Activated CD4-positive, alpha-beta memory T cell treated with anti-CD3 and anti-CD28 coated beads for 36 hours (primary cell): ENCODE measurements at regions of chr3 and their contacts with region 1.

Region 1: DNA sequence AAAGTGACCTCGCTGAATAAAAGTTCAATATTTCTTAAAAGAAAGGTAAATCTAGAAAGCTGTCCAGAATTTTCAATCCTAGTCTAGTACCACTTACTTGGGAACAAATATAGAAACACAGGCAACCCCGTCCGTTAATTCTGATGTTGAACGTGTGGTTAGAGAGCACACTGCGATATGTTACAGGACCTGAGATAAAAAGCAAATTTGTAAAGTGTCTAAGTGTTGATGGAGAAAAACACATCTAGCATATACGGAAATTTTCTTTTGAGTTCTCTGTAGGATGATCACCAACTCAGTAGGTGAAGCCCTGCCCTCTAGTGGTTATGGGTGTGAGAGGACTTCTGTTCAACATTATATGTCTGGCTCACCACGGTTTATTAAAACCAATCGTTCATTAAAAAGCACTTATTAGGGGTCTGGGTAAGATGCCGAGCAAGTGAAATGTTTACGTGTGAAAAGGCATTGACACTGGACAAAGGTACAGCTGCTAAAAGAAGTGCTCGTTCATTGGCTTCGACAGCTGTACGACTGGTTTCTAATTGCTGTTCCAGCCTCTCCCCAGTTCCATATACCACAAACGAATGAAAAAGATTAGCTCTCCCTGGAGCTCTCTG is 1.0 kb upstream of the ATP2C1 start:
- DNase-seq: peak; percentile 69
- H3K4me3 Mint-ChIP-seq: peak overlapping the region; percentile 95
- H3K27ac Mint-ChIP-seq: peak overlapping the region; percentile 99
- H3K4me1 Mint-ChIP-seq: peaks cover 36% of the 10 kb centered on the region
- H3K27me3 Mint-ChIP-seq: no peaks in the 10 kb centered on the region

Region 2: DNA sequence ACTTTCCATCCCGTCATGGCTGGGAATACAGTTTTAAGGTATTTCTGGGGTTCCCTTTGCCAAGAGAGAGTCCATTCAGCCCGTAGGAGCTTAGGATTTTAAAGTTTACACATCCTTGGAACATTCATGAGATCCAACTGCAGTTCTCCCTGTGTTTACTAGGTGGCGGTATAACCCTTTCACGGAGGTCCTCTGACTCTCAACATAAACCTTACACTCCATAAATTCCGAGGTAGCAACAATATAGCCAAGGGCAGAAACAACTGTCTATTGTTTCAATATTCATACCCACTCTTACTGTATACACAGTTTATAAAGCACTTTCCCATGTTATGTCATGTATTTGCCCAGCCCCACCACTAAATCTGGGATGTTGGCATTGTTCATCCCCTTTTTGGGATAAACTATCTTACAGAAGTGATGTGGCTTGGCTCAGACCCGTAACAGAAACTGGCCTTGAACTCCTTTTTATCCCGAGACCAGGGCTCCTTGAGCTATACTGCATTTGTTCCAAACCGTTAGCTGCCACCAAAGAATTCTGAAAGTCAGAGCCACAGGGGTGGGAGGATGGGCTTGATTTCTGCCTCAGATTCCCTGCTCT is 616.6 kb before region 1 on chr3:
- CTCF ChIA-PET with region 1: interaction called, 4 read pairs
- POLR2A ChIA-PET with region 1: no interaction called
- intact Hi-C with region 1: loop called (anchors 1 kb)
- DNase-seq: no peak
- H3K4me3 Mint-ChIP-seq: no peak overlapping the region
- H3K27ac Mint-ChIP-seq: no peak overlapping the region
- H3K4me1 Mint-ChIP-seq: no peaks in the 10 kb centered on the region
- H3K27me3 Mint-ChIP-seq: peaks cover 18% of the 10 kb centered on the region

Region 3: DNA sequence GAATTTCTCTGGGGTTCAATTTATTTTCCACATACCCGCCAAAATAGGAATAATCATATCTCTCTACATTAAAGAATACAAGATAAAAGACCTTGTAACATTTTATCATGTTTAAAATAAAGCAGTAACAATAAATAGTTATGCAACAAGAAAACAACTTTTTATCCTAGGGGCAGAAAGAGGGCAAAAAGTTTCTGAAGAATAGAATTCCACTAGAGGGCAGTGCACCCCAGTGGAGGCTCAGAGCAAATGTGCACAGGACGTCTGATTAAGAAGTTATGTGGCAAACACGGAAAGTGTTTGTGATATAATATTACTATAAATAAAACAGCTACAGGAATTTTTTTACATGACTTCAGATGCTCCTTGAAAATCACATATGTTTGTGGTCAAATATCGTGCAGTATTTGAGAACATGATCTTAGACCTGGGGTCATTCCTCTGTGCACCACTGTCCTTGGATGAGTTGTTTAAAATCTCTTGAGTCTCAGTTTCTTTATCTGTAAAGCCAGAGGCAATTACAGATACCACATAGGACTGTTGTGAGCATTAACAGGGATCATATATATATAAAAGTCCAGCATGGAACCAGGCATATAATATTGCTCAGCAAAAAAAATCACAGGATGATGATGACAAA is 133.0 kb before region 1 on chr3:
- CTCF ChIA-PET with region 1: interaction called, 114 read pairs
- POLR2A ChIA-PET with region 1: interaction called, 5 read pairs
- intact Hi-C with region 1: loop called (anchors 1 kb)
- DNase-seq: peak; percentile 69
- H3K4me3 Mint-ChIP-seq: no peak overlapping the region
- H3K27ac Mint-ChIP-seq: no peak overlapping the region
- H3K4me1 Mint-ChIP-seq: no peaks in the 10 kb centered on the region
- H3K27me3 Mint-ChIP-seq: peaks cover 9% of the 10 kb centered on the region

Region 4: DNA sequence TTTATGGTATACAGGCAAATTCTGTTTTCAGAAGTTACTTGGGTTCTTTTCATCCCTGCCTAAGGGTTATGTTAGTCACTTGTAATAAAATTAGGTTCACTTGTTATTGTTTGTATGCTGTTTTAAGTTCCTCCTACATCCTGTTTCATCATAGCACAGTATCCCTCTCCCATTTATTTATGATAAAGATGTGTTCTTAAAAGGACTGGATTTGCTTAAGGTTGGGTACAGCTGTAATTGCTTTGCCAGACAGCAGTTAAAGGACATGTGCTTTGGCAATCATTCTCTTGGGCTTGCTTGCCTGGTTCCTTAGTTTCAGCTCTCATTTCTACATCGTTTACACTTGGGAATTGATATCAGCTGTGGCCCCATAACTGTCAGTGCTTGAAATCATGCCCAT is 12.7 kb after region 1 on chr3:
- CTCF ChIA-PET with region 1: interaction called, 6 read pairs
- POLR2A ChIA-PET with region 1: interaction called, 6 read pairs
- intact Hi-C with region 1: loop called (anchors 1 kb)
- DNase-seq: no peak
- H3K4me3 Mint-ChIP-seq: no peak overlapping the region
- H3K27ac Mint-ChIP-seq: no peak overlapping the region
- H3K4me1 Mint-ChIP-seq: peaks cover 55% of the 10 kb centered on the region
- H3K27me3 Mint-ChIP-seq: no peaks in the 10 kb centered on the region

Region 5: GRCh38 chr3:131381444-131382291 is 488.8 kb after region 1 on chr3 and contains the start of gene NUDT16:
- CTCF ChIA-PET with region 1: interaction called, 5 read pairs
- POLR2A ChIA-PET with region 1: interaction called, 3 read pairs
- intact Hi-C with region 1: loop called (anchors 1 kb)
- DNase-seq: peak; percentile 99
- H3K4me3 Mint-ChIP-seq: peak within 1 kb of the TSS; percentile 93
- H3K27ac Mint-ChIP-seq: peak within 1 kb of the TSS; percentile 84
- H3K4me1 Mint-ChIP-seq: peaks cover 22% of the 10 kb centered on the region
- H3K27me3 Mint-ChIP-seq: no peaks in the 10 kb centered on the region
- total RNA-seq, gene NUDT16: 7.4 to 8.6 TPM